Thyroid gland (tissue), 4 donors: ENCODE measurements at regions of chr10 and their contacts with region 1.

Region 1: DNA sequence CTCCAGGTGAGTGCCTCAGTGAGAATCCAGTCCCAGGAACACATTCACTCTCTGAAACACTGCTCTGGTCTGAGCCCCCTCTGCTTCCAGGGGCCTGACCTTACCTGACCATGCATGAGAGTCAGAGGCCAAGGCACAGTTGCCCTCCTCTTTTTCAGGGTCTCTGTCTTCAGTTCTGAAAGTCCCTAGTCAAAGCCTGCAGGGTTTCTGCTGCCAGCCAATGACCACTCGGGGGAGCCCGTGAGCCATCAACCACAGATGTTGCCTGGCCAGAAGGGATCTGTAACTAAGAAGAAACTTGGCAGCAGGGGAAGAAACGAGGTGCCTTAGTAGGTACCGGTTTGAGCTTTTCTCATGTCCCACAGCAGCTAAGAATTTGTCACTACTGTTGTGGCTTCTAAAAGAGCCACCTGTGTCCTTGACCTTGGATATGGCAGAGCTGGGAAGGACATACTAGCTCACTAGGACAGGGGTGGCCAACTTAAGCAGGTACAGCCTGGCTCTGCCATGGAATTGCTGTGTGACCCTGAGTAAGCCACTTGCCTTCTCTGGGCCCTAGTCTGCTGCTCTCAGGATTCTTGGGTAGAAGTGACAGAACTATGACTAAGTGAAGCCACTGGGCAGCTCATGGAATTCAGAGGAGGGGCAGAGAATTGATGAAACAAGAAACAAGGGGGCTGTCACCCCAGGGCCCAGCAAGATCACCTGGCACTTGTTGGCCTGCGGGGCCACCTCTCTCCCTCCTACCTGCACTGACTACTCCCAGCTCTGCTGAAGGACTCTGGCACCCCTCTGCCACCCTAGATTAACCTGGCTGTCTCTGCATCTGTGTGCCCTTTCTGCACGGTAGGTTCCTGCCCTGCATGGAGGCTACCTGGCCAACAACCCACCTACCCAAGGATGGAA is 83.8 kb upstream of the GPR26 start:
- DNase-seq: peak; percentile 75 to 86
- H3K4me3 ChIP-seq: no peak overlapping the region
- H3K27ac ChIP-seq: no peak overlapping the region
- H3K4me1 ChIP-seq: peaks cover 4 to 11% of the 10 kb centered on the region in 2 donors
- H3K27me3 ChIP-seq: no peaks in the 10 kb centered on the region
- CTCF ChIP-seq: peak; percentile 65 to 89 (median 69)
- POLR2A ChIP-seq: no peak

Region 2: GRCh38 chr10:123967396-123968243 is 385.3 kb after region 1 on chr10:
- intact Hi-C with region 1: loop called (anchors 2 kb)
- DNase-seq: peak; percentile 71 to 78
- H3K4me3 ChIP-seq: no peak overlapping the region
- H3K27ac ChIP-seq: no peak overlapping the region
- H3K4me1 ChIP-seq: peaks cover 0 to 7% of the 10 kb centered on the region in 2 donors
- H3K27me3 ChIP-seq: peaks cover 11% of the 10 kb centered on the region
- CTCF ChIP-seq: peak; percentile 78 to 93 (median 88)
- POLR2A ChIP-seq: no peak